ENCODE measurements at regions of chr2 and their contacts with region 1.

Region 1: DNA sequence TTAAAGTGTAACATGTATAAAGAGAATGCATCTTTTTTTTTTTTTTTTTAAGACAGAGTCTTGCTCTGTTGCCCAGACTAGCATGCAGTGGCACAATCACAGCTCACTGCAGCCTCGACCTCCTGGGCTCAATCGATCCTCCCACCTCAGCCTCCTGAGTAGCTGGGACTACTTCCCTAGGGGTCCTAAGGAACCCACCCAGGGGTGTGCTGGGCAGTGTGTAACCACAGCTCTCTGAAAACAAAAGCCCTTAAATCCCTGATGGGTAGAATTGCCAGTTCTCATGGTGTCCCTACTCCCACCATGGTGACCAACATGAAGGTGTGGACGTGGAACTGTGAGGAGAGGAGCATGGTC is 105.6 kb upstream of the ST3GAL5 start:
- DNase-seq: no peak
- H3K4me3 Mint-ChIP-seq: no peak overlapping the region
- H3K27ac Mint-ChIP-seq: no peak overlapping the region
- H3K4me1 Mint-ChIP-seq: peaks cover 39% of the 10 kb centered on the region
- H3K27me3 Mint-ChIP-seq: no peaks in the 10 kb centered on the region

Region 2: DNA sequence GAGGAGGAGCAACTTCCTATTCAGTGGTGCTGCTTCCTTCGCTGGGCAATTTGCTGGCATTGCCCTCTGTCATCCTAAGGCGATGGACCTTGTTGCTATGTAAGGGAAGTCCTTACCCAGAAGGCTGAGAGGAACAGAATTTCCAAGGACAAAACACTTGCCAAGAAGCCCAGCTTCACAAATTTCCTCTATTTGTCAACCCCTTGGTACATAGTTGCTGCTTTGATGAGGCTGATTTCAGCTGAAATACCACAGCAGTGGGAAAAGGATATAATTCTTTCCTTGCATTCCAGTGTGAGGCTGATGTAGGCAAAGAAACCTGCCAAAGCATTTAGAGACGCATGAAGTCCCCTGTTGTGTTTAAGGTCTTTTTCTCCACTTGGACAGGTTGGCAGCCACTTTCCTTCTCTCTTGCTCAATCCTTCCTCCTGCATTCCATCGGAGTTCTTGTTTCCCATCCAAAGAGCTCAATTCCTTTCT is 89.2 kb before region 1 on chr2:
- CTCF ChIA-PET with region 1: no interaction called
- intact Hi-C with region 1: loop called (anchors 1 kb)
- DNase-seq: no peak
- H3K4me3 Mint-ChIP-seq: no peak overlapping the region
- H3K27ac Mint-ChIP-seq: no peak overlapping the region
- H3K4me1 Mint-ChIP-seq: peaks cover 4% of the 10 kb centered on the region
- H3K27me3 Mint-ChIP-seq: no peaks in the 10 kb centered on the region

Region 3: GRCh38 chr2:85935746-85936208 is 58.6 kb before region 1 on chr2:
- CTCF ChIA-PET with region 1: no interaction called
- intact Hi-C with region 1: loop called (anchors 5 kb)
- DNase-seq: no peak
- H3K4me3 Mint-ChIP-seq: no peak overlapping the region
- H3K27ac Mint-ChIP-seq: no peak overlapping the region
- H3K4me1 Mint-ChIP-seq: peaks cover 20% of the 10 kb centered on the region
- H3K27me3 Mint-ChIP-seq: no peaks in the 10 kb centered on the region

Region 4: DNA sequence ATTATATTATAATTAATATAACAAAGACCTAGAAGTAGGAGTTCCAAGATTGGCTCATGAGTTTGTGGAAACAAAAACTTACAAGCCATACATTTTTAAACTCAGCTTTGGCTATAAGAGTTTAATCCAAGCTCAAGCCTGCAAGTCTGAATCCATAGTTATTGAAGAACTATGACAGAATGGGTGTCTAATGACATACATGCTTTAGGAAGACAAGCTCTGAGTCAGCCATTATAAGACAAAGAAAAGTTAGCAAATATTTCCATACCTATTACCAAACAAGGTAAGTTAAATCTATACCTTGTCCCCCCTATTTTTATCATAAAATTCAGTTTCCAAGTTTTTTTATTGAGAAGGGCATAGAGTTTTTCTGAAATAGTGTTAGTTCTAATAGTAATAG is 15.7 kb after region 1 on chr2:
- CTCF ChIA-PET with region 1: interaction called, 13 read pairs
- intact Hi-C with region 1: no loop called
- DNase-seq: no peak
- H3K4me3 Mint-ChIP-seq: no peak overlapping the region
- H3K27ac Mint-ChIP-seq: no peak overlapping the region
- H3K4me1 Mint-ChIP-seq: no peaks in the 10 kb centered on the region
- H3K27me3 Mint-ChIP-seq: no peaks in the 10 kb centered on the region

Region 5: DNA sequence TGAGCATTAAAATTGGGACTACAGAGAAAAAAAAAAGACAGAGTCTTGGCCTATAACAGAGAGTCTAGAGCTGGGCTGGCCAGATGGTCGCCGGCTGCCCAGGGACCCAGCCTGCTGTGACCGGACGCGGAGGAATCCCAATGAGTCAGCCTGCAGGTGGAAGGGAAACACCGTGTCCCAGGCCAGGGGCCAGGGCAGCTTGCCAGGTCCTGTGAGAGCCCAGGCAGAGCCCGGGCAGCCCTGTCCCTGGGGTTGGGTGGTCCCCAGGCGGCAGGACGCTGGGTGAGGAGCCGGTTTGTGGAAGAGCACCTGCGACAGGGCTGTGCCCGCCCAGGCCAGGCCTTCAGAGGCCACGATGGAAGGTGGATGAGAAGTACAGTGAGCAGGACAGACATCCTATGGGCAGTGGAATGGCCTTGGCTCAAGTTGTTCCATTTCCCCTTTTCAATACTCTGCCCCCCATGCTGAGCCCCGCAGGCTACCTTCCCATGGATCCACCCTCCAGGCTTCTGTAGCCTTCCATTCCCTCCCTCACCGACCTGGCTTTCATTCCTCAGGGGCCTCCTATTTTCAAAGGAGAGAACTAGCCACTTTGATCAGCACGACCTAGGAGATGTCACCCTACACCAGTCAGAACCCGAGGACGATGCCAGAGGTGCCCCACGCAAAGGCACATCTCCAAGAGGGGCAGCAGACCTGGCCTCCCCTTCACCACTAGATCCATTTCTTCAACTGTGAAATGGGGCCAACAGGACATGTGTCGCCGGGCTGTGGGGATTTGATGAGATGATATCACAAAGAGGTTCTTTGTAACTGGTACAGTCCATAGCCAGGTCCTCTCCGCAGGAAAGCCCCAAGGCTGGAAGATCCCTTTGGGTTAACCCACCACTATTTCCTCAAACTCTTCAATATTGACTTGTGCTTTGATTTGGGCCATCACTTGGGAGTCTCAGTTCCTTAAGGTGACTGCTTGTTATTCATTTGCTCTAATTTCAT is 23.8 kb after region 1 on chr2:
- CTCF ChIA-PET with region 1: no interaction called
- intact Hi-C with region 1: loop called (anchors 2 kb)
- DNase-seq: no peak
- H3K4me3 Mint-ChIP-seq: no peak overlapping the region
- H3K27ac Mint-ChIP-seq: no peak overlapping the region
- H3K4me1 Mint-ChIP-seq: peaks cover 9% of the 10 kb centered on the region
- H3K27me3 Mint-ChIP-seq: no peaks in the 10 kb centered on the region

Region 6: GRCh38 chr2:86072271-86072858 is 78.0 kb after region 1 on chr2:
- CTCF ChIA-PET with region 1: no interaction called
- intact Hi-C with region 1: loop called (anchors 5 kb)
- DNase-seq: no peak
- H3K4me3 Mint-ChIP-seq: no peak overlapping the region
- H3K27ac Mint-ChIP-seq: peak overlapping the region; percentile 53
- H3K4me1 Mint-ChIP-seq: peaks cover 14% of the 10 kb centered on the region
- H3K27me3 Mint-ChIP-seq: no peaks in the 10 kb centered on the region

Measured in activated naive CD4-positive, alpha-beta T cell treated with anti-CD3 and anti-CD28 coated beads for 36 hours (primary cell).